ENCODE measurements at regions of chr20 and their contacts with region 1.

Region 1: GRCh38 chr20:52127309-52127708 is 64.3 kb downstream of the ZFP64 start:
- DNase-seq: no peak
- CTCF ChIP-seq: no peak

Region 2: GRCh38 chr20:50450881-50451752 is 1676.2 kb before region 1 on chr20:
- in situ Hi-C with region 1: no loop called
- DNase-seq: peak; percentile 61
- CTCF ChIP-seq: no peak

Region 3: GRCh38 chr20:52031563-52032303 is 95.6 kb before region 1 on chr20:
- in situ Hi-C with region 1: no loop called
- DNase-seq: no peak
- CTCF ChIP-seq: no peak

Region 4: DNA sequence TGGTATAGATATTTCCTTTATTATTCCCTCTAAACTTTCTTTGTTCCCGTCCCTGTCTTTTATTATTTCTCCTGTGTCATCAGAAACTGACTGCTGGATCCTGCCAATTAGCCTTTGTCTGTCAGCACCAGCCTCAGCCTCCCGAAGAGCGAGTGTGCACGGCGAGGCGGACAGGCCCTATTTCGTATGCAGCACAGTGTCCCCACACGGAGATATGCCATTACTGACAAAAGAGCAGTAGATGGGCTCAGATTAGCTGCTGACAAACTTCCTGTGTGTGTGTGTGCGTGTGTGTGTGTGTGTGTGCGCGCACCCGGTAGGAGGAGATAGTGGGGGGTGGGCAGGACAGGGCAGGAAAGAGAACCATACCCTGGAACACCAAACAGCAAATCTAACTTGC is 163.8 kb after region 1 on chr20:
- in situ Hi-C with region 1: no loop called
- DNase-seq: no peak
- CTCF ChIP-seq: no peak

Region 5: DNA sequence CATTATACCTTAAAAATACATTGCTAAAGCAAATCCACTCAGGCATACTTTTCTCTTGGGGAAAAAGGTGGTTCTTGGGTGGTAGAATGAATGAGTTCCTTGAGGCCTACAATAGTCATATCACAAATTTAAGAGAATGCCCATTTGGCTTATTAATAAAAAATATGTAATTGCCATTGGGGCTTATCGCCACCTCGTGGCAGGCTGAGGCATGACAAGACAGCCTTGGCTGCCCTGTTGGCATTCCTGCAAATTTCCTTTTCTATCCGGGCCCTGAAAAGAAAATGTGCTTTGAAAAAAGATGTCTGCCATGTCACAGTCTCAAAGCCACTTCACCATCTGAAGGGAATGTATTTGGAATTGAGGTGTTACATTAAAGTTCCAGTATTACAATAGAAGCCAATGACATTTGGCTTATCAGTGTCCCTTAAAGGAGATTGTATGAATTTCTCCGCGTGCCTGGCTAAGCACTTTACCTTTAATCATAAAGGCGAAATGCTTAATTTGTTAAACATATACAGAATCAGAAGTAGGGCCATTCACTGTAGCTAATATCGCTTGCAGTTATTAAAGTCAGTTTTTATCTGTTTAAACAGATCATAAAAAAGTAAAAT is 252.5 kb after region 1 on chr20:
- in situ Hi-C with region 1: loop called (anchors 10 kb)
- DNase-seq: peak; percentile 22
- CTCF ChIP-seq: peak; percentile 80

Region 6: DNA sequence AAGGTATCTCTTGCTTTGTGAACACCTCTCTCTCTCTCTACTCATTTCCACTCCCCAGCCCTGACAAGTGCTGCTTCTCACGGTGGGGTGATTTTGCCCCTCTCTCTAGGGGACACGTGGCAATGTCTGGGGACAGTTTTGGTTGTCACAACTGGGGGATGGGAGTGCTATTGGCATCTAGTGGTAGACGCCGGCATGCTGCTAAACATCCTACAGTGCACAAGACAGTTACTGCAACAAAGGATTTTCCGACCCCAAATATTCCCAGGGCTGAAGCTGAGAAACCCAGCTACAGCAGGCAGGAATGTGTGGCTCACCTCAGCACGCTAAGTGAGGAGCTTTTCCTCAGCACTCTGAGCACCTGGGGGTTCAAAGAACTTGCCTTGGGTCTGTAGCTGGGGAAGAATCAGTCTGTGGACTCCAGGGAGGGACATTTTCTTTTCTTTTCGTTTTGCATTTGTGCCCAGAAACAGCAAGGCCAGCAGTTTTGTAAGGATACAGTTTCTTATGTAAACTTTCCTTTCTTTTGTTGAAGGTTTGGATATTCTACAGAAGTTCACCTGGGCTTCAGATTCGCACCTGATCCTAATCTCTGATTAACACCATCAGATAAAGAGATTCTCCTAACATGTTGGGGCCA is 311.1 kb after region 1 on chr20:
- in situ Hi-C with region 1: no loop called
- DNase-seq: no peak
- CTCF ChIP-seq: no peak